ENCODE measurements at regions of chr6 and their contacts with region 1.

Region 1: DNA sequence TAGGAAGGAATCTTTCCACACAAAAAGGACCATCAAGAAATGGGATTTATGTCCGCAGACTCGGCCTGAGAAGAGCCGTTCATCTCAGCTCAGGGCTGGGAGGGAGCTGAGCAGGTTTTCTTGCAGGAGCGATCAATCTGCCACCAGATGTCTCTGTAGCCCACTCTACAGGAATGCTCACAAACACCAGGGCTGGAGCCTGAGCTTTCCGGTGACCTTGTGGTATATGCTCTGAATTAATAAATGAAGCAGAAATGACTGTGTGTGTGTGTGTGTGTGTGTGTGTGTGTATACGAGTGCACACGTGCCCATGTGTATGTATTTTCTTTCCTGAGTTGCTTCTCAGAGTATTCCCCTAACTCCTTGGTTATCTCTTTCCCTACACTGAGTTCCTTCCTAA is 12.0 kb downstream of the CD83 start:
- DNase-seq: peak in 2 of 5 donors; percentile 11 to 16
- H3K4me3 ChIP-seq: no peak overlapping the region
- H3K4me3 Mint-ChIP-seq: no peak overlapping the region
- H3K27ac ChIP-seq: no peak overlapping the region
- H3K27ac Mint-ChIP-seq: peak overlapping the region in 1 of 7 donors; percentile 9
- H3K4me1 ChIP-seq: peaks cover 4% of the 10 kb centered on the region
- H3K4me1 Mint-ChIP-seq: peaks cover 7 to 40% (median 26%) of the 10 kb centered on the region in 4 donors
- H3K27me3 ChIP-seq: no peaks in the 10 kb centered on the region
- H3K27me3 Mint-ChIP-seq: no peaks in the 10 kb centered on the region

Region 2: GRCh38 chr6:14075095-14075503 is 54.5 kb before region 1 on chr6:
- CTCF ChIA-PET with region 1: no interaction called
- POLR2A ChIA-PET with region 1: no interaction called
- intact Hi-C with region 1: no loop called
- DNase-seq: peak; percentile 50 to 70 (median 57)
- H3K4me3 ChIP-seq: peak overlapping the region; percentile 5 to 79
- H3K4me3 Mint-ChIP-seq: peak overlapping the region; percentile 81 to 93 (median 89)
- H3K27ac ChIP-seq: peak overlapping the region; percentile 60
- H3K27ac Mint-ChIP-seq: peak overlapping the region; percentile 75 to 97 (median 96)
- H3K4me1 ChIP-seq: peaks cover 17% of the 10 kb centered on the region
- H3K4me1 Mint-ChIP-seq: peaks cover 17 to 37% (median 24%) of the 10 kb centered on the region in 4 donors
- H3K27me3 ChIP-seq: no peaks in the 10 kb centered on the region
- H3K27me3 Mint-ChIP-seq: peaks cover 0 to 2% of the 10 kb centered on the region in 2 donors

Region 3: GRCh38 chr6:15441215-15441868 is 1311.8 kb after region 1 on chr6:
- CTCF ChIA-PET with region 1: interaction called, 4 read pairs
- POLR2A ChIA-PET with region 1: no interaction called
- intact Hi-C with region 1: loop called (anchors 1 kb)
- DNase-seq: peak in 4 of 5 donors; percentile 29 to 46 (median 37)
- H3K4me3 ChIP-seq: no peak overlapping the region
- H3K4me3 Mint-ChIP-seq: no peak overlapping the region
- H3K27ac ChIP-seq: no peak overlapping the region
- H3K27ac Mint-ChIP-seq: peak overlapping the region in 1 of 7 donors; percentile 3
- H3K4me1 ChIP-seq: peaks cover 43% of the 10 kb centered on the region
- H3K4me1 Mint-ChIP-seq: peaks cover 50 to 72% (median 58%) of the 10 kb centered on the region in 4 donors
- H3K27me3 ChIP-seq: no peaks in the 10 kb centered on the region
- H3K27me3 Mint-ChIP-seq: no peaks in the 10 kb centered on the region

Region 4: GRCh38 chr6:15491255-15491985 is 1361.8 kb after region 1 on chr6:
- CTCF ChIA-PET with region 1: interaction called, 6 read pairs
- POLR2A ChIA-PET with region 1: no interaction called
- intact Hi-C with region 1: loop called (anchors 1 kb)
- DNase-seq: peak; percentile 61 to 64 (median 63)
- H3K4me3 ChIP-seq: no peak overlapping the region
- H3K4me3 Mint-ChIP-seq: no peak overlapping the region
- H3K27ac ChIP-seq: no peak overlapping the region
- H3K27ac Mint-ChIP-seq: peak overlapping the region in 6 of 7 donors; percentile 10 to 61 (median 48)
- H3K4me1 ChIP-seq: peaks cover 7% of the 10 kb centered on the region
- H3K4me1 Mint-ChIP-seq: peaks cover 22 to 32% (median 24%) of the 10 kb centered on the region in 4 donors
- H3K27me3 ChIP-seq: no peaks in the 10 kb centered on the region
- H3K27me3 Mint-ChIP-seq: no peaks in the 10 kb centered on the region

Region 5: DNA sequence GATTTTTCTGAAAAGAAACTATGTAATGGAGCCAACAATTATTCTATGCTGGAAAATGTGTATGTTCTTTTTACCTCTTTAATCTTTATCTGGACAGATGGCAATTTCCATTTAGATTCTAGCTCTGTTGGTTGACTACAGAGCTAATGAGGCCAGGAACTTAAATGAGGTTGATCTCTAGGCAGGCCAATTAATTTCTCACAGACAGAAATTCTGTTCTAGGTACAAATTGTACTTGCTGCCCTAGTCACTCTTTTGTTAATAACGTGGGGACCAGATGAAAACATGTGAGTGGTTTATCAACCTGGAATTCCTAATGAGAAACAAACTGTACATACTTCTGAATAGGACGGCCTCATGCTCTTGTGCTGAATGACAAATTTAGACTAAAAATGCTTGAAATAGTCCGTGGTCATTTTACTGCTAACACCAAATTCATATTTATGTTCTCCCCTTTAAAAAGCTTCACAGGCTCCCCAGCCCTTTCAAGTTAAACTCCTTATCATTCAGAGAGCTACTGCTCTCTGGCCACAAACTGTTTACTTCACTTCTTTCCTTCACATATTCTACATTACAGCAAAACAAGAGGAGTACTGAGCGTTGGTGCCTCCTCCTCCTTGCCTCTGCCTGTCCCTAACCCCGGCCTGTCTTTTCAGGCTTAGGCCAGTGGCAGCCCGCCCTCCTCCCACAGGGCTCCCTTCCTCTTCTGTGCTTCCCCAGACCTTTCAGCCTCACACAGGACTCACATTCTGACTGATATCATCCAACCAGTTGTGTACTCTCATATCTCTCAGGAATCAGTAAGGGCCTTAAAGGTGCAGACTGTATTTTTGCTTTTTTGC is 1491.8 kb after region 1 on chr6:
- CTCF ChIA-PET with region 1: interaction called, 16 read pairs
- POLR2A ChIA-PET with region 1: interaction called, 5 read pairs
- intact Hi-C with region 1: loop called (anchors 10 kb)
- DNase-seq: no peak
- H3K4me3 ChIP-seq: no peak overlapping the region
- H3K4me3 Mint-ChIP-seq: peak overlapping the region in 1 of 8 donors; percentile 24
- H3K27ac ChIP-seq: no peak overlapping the region
- H3K27ac Mint-ChIP-seq: peak overlapping the region in 3 of 7 donors; percentile 37 to 51 (median 49)
- H3K4me1 ChIP-seq: peaks cover 8% of the 10 kb centered on the region
- H3K4me1 Mint-ChIP-seq: peaks cover 13 to 42% (median 25%) of the 10 kb centered on the region in 4 donors
- H3K27me3 ChIP-seq: no peaks in the 10 kb centered on the region
- H3K27me3 Mint-ChIP-seq: no peaks in the 10 kb centered on the region